ENCODE measurements at regions of chr3 and their contacts with region 1.

Region 1: DNA sequence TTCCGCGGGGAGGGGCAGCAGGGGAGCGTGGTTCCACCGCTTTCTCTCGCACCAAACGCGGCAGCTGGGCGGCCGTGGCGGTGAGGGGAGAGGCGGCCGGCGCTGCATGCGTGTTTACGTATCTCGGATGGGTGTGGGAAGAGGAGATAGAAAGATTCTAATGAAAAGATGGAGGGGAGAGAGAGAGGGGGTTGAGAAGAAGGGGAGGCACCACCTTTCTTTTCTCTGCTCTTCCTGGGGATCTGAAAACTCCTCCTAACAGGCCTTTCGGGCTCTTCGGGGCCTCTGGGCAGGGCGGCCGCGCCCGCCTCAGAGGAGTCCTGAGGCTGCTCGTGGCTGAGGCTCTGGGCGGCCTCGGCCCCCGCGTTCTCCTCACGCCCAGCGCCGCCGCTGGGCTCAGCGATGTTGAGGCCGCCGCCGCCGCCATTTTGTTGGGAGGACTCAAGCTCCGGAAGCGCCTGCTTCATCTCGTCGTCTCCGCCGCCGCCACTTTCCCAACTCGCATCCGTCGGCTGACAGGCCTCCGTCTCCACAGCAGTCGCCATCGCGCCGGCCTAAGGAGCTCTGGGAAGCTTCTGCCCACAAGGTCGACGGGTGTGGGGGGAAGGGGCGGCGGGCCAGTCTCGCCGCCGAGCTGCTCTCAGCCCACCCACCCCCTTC is 473 bp downstream of the TASOR start:
- DNase-seq: peak; percentile 87
- ATAC-seq: peak; percentile 81
- H3K4me3 Mint-ChIP-seq: peak overlapping the region; percentile 96
- H3K27ac Mint-ChIP-seq: peak overlapping the region; percentile 97
- H3K4me1 Mint-ChIP-seq: peaks cover 34% of the 10 kb centered on the region
- H3K27me3 Mint-ChIP-seq: no peaks in the 10 kb centered on the region

Region 2: DNA sequence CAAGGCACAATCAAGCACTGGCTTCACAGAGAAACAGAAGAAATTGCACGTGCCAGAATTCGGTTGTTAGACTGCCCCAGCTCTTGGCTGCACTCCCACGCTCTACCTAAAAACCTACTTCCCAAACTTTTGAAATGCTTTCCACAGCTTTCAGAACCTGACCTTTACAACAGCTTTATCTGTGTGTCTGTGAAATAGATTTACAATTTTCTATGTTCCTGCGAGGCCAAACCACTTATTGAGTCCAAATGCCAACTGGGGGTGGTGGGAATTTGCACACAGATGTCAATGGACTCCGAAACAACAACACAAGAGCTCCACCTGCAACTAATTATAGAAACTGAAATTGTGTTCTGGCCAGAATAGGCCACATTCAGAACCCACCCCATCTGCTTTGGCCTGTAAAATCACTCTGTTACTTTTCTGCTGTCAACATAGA is 258.9 kb before region 1 on chr3:
- CTCF ChIA-PET with region 1: no interaction called
- POLR2A ChIA-PET with region 1: no interaction called
- DNase-seq: no peak
- ATAC-seq: no peak
- H3K4me3 Mint-ChIP-seq: no peak overlapping the region
- H3K27ac Mint-ChIP-seq: no peak overlapping the region
- H3K4me1 Mint-ChIP-seq: no peaks in the 10 kb centered on the region
- H3K27me3 Mint-ChIP-seq: peaks cover 5% of the 10 kb centered on the region

Region 3: GRCh38 chr3:56556908-56557830 is 125.4 kb before region 1 on chr3 and contains the start of gene CCDC66:
- CTCF ChIA-PET with region 1: interaction called, 4 read pairs
- POLR2A ChIA-PET with region 1: interaction called, 12 read pairs
- DNase-seq: peak; percentile 96
- ATAC-seq: peak; percentile 100
- H3K4me3 Mint-ChIP-seq: peak within 1 kb of the TSS; percentile 98
- H3K27ac Mint-ChIP-seq: peak within 1 kb of the TSS; percentile 99
- H3K4me1 Mint-ChIP-seq: peaks cover 15% of the 10 kb centered on the region
- H3K27me3 Mint-ChIP-seq: peaks cover 5% of the 10 kb centered on the region
- total RNA-seq, gene CCDC66: 25.0 to 26.2 TPM

Region 4: DNA sequence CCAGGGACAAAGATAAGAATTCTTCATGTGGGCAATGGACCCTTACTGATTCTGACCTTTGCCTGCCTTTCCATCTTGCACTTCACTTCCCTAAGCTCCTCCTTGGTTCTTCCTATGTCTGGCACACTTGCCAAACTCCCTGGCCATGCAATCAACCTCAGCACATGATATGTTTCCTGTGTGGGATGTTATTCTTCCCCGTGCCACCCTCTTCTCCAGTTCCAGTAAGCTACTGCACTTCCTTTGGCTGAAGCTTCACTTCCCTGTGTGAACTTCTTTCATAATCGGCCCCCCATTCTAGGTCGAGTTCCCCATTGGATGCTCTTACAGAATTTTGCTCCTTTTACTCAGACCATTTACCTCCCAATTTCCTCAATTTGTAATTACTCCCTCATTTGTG is 11.2 kb after region 1 on chr3:
- CTCF ChIA-PET with region 1: interaction called, 7 read pairs
- POLR2A ChIA-PET with region 1: interaction called, 38 read pairs
- DNase-seq: no peak
- ATAC-seq: peak; percentile 23
- H3K4me3 Mint-ChIP-seq: peak overlapping the region; percentile 80
- H3K27ac Mint-ChIP-seq: peak overlapping the region; percentile 94
- H3K4me1 Mint-ChIP-seq: peaks cover 47% of the 10 kb centered on the region
- H3K27me3 Mint-ChIP-seq: no peaks in the 10 kb centered on the region

Region 5: GRCh38 chr3:56702490-56703315 is 20.1 kb after region 1 on chr3:
- CTCF ChIA-PET with region 1: interaction called, 10 read pairs
- POLR2A ChIA-PET with region 1: interaction called, 5 read pairs
- DNase-seq: peak; percentile 74
- ATAC-seq: peak; percentile 73
- H3K4me3 Mint-ChIP-seq: no peak overlapping the region
- H3K27ac Mint-ChIP-seq: no peak overlapping the region
- H3K4me1 Mint-ChIP-seq: peaks cover 34% of the 10 kb centered on the region
- H3K27me3 Mint-ChIP-seq: no peaks in the 10 kb centered on the region

Region 6: DNA sequence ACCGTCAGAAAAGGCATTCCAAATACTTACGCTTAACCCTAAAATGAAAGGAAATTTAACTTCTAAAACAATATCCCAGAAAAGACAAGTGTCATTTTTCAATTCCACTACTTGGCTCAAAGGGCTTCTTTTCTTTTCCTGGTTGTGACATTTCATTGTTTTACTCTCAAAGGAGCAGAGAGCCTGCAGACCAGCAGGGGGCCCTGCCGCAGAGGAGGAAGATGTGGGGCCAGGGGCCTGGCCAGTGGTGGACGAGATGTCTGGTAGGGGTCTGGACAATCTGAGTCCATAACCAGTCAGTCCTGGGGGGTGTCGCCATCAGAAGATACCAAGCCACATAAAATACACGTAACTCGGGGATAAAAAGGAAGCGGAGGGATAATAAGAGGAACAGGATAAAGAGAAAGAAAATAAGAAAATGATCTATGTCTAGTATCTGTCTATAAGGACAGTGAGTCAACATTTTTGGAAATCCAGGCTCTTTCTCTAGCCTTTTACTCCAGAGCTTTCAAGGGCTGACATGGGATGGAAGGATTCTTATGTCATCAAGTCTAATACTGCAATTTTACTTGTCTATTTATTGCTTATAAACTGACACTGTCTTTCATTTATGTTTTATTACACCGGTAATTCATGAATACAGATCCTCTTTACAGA is 173.4 kb after region 1 on chr3:
- CTCF ChIA-PET with region 1: no interaction called
- POLR2A ChIA-PET with region 1: no interaction called
- DNase-seq: peak; percentile 36
- ATAC-seq: no peak
- H3K4me3 Mint-ChIP-seq: no peak overlapping the region
- H3K27ac Mint-ChIP-seq: no peak overlapping the region
- H3K4me1 Mint-ChIP-seq: peaks cover 34% of the 10 kb centered on the region
- H3K27me3 Mint-ChIP-seq: no peaks in the 10 kb centered on the region

Measured in activated CD8-positive, alpha-beta T cell treated with anti-CD3 and anti-CD28 coated beads, Interleukin-2, amount 10 ng/mL, durations not matched to agents 7 days and 5 days (primary cell).